Left colon (tissue), 2 donors: ENCODE measurements at regions of chr6 and their contacts with region 1.

Region 1: GRCh38 chr6:132279592-132280139 is 121.6 kb downstream of the MOXD1 start:
- DNase-seq: peak; percentile 49 to 69
- ATAC-seq: peak; percentile 85

Region 2: GRCh38 chr6:131792091-131792496 is 487.6 kb before region 1 on chr6:
- intact Hi-C with region 1: no loop called
- DNase-seq: no peak
- ATAC-seq: no peak

Region 3: GRCh38 chr6:132465530-132466485 is 186.1 kb after region 1 on chr6:
- intact Hi-C with region 1: loop called in 1 of 2 experiments (anchors 5 kb)
- DNase-seq: no peak
- ATAC-seq: no peak

Region 4: GRCh38 chr6:132483779-132484679 is 204.4 kb after region 1 on chr6:
- intact Hi-C with region 1: loop called in 1 of 2 experiments (anchors 5 kb)
- DNase-seq: no peak
- ATAC-seq: peak; percentile 70